Natural killer cell (primary cell): ENCODE measurements at regions of chr1 and their contacts with region 1.

Region 1: GRCh38 chr1:197356723-197357533 is 88.9 kb downstream of the CRB1 start:
- DNase-seq: peak in 1 of 2 donors; percentile 63
- ATAC-seq: peak; percentile 44 to 49 (median 49)
- H3K4me3 ChIP-seq: no peak overlapping the region
- H3K4me3 Mint-ChIP-seq: no peak overlapping the region
- H3K27ac ChIP-seq: no peak overlapping the region
- H3K27ac Mint-ChIP-seq: no peak overlapping the region
- H3K4me1 ChIP-seq: no peaks in the 10 kb centered on the region
- H3K4me1 Mint-ChIP-seq: peaks cover 0 to 5% of the 10 kb centered on the region in 2 donors
- H3K27me3 ChIP-seq: no peaks in the 10 kb centered on the region
- H3K27me3 Mint-ChIP-seq: no peaks in the 10 kb centered on the region
- CTCF ChIP-seq: peak; percentile 47

Region 2: DNA sequence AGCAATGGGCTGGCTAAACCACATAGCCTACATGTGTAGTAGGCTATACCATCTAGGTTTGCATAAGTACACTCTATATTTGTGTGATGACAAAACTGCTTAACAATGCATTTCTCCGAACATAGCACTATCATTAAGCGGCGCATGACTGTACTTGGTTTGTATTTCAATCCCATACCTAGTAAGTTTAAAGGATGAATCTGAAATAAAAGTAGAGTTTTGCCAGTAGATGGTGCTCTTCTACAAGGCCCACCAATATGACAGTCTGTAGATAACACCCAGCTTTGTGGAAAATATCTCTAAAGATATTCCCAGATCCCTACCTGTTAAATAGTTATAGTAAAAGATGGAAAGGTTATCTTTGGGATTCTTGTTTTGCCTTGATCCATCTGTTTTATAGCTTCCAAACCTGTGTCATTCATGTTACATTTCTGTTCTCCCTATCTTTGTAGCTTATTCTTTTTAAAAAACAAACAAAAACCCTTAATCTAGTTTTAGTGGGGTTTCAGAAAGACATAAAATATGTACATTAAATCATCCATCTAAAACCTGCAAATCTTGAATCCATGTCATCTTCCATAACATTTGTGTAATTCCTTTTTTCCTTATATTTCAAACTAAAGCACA is 176.6 kb before region 1 on chr1:
- intact Hi-C with region 1: loop called (anchors 1 kb)
- DNase-seq: peak in 1 of 2 donors; percentile 61
- ATAC-seq: peak; percentile 54 to 60 (median 55)
- H3K4me3 ChIP-seq: no peak overlapping the region
- H3K4me3 Mint-ChIP-seq: no peak overlapping the region
- H3K27ac ChIP-seq: no peak overlapping the region
- H3K27ac Mint-ChIP-seq: no peak overlapping the region
- H3K4me1 ChIP-seq: no peaks in the 10 kb centered on the region
- H3K4me1 Mint-ChIP-seq: peaks cover 2 to 7% of the 10 kb centered on the region in 2 donors
- H3K27me3 ChIP-seq: no peaks in the 10 kb centered on the region
- H3K27me3 Mint-ChIP-seq: no peaks in the 10 kb centered on the region
- CTCF ChIP-seq: peak; percentile 64